ENCODE measurements at regions of chr7 and their contacts with region 1.

Region 1: GRCh38 chr7:77368974-77369373 is 47.2 kb downstream of the GSAP start:
- DNase-seq: no peak
- H3K4me3 ChIP-seq: no peak overlapping the region
- H3K4me3 Mint-ChIP-seq: no peak overlapping the region
- H3K27ac Mint-ChIP-seq: no peak overlapping the region
- H3K4me1 ChIP-seq: no peaks in the 10 kb centered on the region
- H3K4me1 Mint-ChIP-seq: no peaks in the 10 kb centered on the region
- H3K27me3 ChIP-seq: no peaks in the 10 kb centered on the region
- H3K27me3 Mint-ChIP-seq: no peaks in the 10 kb centered on the region
- CTCF ChIP-seq: peak in 1 of 2 experiments; percentile 31

Region 2: GRCh38 chr7:77415823-77416622 is 47.0 kb after region 1 on chr7 and contains the start of gene GSAP:
- CTCF ChIA-PET with region 1: no interaction called
- POLR2A ChIA-PET with region 1: no interaction called
- intact Hi-C with region 1: loop called (anchors 5 kb)
- DNase-seq: peak; percentile 65 to 80
- H3K4me3 ChIP-seq: peak within 1 kb of the TSS; percentile 67
- H3K4me3 Mint-ChIP-seq: peak within 1 kb of the TSS; percentile 72
- H3K27ac Mint-ChIP-seq: peak within 1 kb of the TSS; percentile 85
- H3K4me1 ChIP-seq: peaks cover 23% of the 10 kb centered on the region; the same call in 1 of the 2 replicates
- H3K4me1 Mint-ChIP-seq: peaks cover 19% of the 10 kb centered on the region
- H3K27me3 ChIP-seq: no peaks in the 10 kb centered on the region
- H3K27me3 Mint-ChIP-seq: no peaks in the 10 kb centered on the region
- CTCF ChIP-seq: no peak
- total RNA-seq, gene GSAP: 25.7 and 27.1 TPM in 2 replicates

Region 3: DNA sequence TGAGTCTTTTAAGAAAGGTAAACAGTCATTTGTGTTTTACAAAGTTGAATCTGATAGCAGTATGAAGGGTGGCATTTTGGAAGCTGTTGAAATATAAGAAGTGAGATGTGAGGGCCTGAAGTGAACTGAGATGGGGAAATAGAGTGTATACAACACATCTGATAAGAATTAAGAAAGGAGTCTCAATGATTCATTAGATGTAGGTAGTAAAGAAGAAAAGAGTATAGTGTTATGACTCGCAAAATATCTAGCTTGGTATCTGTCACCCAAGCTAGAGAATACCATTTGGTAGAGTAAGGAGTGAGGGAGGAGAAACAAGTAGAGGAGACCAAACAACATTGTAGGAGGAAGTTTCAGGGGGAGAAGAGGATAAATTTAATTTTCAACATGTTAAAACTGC is 173.4 kb after region 1 on chr7:
- CTCF ChIA-PET with region 1: no interaction called
- POLR2A ChIA-PET with region 1: no interaction called
- intact Hi-C with region 1: loop called (anchors 10 kb)
- DNase-seq: no peak
- H3K4me3 ChIP-seq: no peak overlapping the region
- H3K4me3 Mint-ChIP-seq: no peak overlapping the region
- H3K27ac Mint-ChIP-seq: no peak overlapping the region
- H3K4me1 ChIP-seq: peaks cover 12% of the 10 kb centered on the region; the same call in 1 of the 2 replicates
- H3K4me1 Mint-ChIP-seq: peaks cover 24% of the 10 kb centered on the region
- H3K27me3 ChIP-seq: no peaks in the 10 kb centered on the region
- H3K27me3 Mint-ChIP-seq: no peaks in the 10 kb centered on the region
- CTCF ChIP-seq: no peak

Region 4: DNA sequence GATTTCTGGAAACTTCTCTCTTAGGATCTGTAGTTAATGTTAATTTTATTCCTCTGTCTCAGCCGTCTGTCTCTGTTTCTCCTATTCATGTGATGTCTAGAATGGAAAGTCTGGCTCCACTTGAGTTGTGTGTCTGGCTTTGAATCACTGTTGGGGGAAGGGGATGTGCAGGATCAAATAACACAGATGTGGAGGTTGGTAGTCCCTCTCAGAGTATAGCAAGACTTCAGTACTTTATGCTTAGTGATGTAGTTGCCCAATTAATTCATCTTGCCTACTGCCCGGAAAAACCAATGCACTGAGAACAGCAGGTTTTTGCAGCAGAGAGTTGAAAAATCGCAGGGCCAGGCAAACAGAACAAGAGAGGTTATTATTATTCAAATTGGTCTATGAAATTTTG is 508.8 kb after region 1 on chr7:
- CTCF ChIA-PET with region 1: no interaction called
- POLR2A ChIA-PET with region 1: no interaction called
- intact Hi-C with region 1: no loop called
- DNase-seq: no peak
- H3K4me3 ChIP-seq: no peak overlapping the region
- H3K4me3 Mint-ChIP-seq: no peak overlapping the region
- H3K27ac Mint-ChIP-seq: no peak overlapping the region
- H3K4me1 ChIP-seq: peaks cover 37% of the 10 kb centered on the region
- H3K4me1 Mint-ChIP-seq: peaks cover 26% of the 10 kb centered on the region
- H3K27me3 ChIP-seq: no peaks in the 10 kb centered on the region
- H3K27me3 Mint-ChIP-seq: no peaks in the 10 kb centered on the region
- CTCF ChIP-seq: no peak